Mammary epithelial cell (primary cell): ENCODE measurements at regions of chr16 and their contacts with region 1.

Region 1: GRCh38 chr16:89853306-89853993 is 19.9 kb upstream of the TCF25 start:
- DNase-seq: no peak
- H3K4me3 ChIP-seq: no peak overlapping the region
- H3K27ac ChIP-seq: no peak overlapping the region
- H3K4me1 ChIP-seq: no peaks in the 10 kb centered on the region
- H3K27me3 ChIP-seq: no peaks in the 10 kb centered on the region
- CTCF ChIP-seq: no peak

Region 2: GRCh38 chr16:89798832-89799370 is 54.5 kb before region 1 on chr16:
- CTCF ChIA-PET with region 1: no interaction called
- dilution Hi-C with region 1: loop called (anchors 5 kb)
- in situ Hi-C with region 1: no loop called
- intact Hi-C with region 1: no loop called
- DNase-seq: no peak
- H3K4me3 ChIP-seq: no peak overlapping the region
- H3K27ac ChIP-seq: no peak overlapping the region
- H3K4me1 ChIP-seq: no peaks in the 10 kb centered on the region
- H3K27me3 ChIP-seq: no peaks in the 10 kb centered on the region
- CTCF ChIP-seq: no peak

Region 3: DNA sequence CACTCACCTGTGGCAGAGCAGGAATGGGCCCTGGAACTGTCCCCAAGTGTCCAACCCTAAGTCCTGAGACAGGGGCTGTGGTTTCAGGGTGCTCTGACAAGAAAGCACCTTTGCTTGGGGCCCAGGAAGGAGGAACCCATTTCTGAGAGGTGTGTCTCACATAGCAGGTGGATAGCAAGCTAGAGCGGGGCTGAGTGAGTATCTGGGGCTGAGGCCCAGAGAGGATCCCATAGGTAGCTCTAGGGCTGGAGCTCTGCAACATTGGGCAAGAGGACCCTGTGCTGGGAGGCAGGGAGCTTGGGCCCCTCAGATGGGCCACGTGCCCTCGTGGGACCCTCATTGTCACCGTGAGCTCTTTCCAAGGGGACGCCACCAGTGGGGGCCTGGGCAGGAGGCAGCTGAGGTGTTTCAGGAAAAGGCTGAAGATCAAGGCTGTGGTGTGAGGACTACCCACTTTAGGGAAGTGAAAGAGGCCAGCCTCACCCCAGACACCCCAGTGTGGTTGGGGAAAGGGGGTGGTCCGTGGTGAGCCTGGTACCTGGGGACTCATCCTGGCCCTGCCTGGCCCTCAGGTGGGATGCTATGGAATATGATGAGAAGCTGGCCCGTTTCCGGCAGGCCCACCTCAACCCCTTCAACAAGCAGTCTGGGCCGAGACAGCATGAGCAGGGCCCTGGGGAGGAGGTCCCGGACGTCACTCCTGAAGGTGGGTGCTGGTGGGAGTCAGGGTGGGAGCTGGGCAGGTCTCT is 100.4 kb after region 1 on chr16:
- CTCF ChIA-PET with region 1: no interaction called
- dilution Hi-C with region 1: no loop called
- in situ Hi-C with region 1: no loop called
- intact Hi-C with region 1: no loop called
- DNase-seq: no peak
- H3K4me3 ChIP-seq: no peak overlapping the region
- H3K27ac ChIP-seq: no peak overlapping the region
- H3K4me1 ChIP-seq: peaks cover 8% of the 10 kb centered on the region
- H3K27me3 ChIP-seq: no peaks in the 10 kb centered on the region
- CTCF ChIP-seq: no peak